ENCODE measurements at regions of chr3 and their contacts with region 1.

Region 1: DNA sequence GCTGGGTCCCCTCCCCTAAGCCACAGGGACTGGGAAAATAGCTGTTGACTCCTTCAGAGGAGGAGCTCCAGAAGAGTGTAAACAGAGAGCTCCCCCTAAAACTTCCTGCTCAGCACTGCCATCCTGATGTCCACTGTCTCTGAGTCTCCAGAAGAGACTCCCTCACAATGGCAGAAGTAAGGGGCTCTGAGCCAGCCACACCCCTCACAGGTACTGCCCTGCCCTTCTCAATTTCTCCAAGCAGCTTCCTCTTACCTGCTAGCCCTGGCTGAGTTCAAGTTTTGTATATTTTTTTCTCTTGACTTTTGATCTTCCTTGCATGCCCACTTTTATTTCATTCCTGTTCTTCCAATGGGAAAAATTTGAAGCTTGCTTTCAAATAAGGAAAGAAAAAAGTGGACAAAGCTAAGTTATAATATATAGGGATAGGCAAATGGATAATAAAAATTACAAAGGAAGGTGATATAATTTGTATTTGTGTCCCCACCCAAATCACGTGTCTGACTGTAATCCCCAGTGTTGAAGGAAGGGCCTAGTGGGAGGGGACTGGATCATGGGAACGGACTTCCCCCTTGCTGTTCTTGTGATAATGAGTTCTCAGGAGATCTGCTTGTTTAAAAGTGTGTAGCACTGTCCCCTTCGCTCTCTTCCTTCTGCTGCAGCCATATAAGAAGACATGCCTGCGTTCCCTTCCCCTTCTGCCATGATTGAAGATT is 442.2 kb upstream of the WNT5A start:
- DNase-seq: no peak
- ATAC-seq: no peak

Region 2: GRCh38 chr3:54706738-54707137 is 1222.6 kb before region 1 on chr3:
- intact Hi-C with region 1: loop called (anchors 5 kb)
- DNase-seq: no peak
- ATAC-seq: no peak

Measured in sciatic nerve (tissue), 2 donors.